BJ (cell line): ENCODE measurements at regions of chr12 and their contacts with region 1.

Region 1: DNA sequence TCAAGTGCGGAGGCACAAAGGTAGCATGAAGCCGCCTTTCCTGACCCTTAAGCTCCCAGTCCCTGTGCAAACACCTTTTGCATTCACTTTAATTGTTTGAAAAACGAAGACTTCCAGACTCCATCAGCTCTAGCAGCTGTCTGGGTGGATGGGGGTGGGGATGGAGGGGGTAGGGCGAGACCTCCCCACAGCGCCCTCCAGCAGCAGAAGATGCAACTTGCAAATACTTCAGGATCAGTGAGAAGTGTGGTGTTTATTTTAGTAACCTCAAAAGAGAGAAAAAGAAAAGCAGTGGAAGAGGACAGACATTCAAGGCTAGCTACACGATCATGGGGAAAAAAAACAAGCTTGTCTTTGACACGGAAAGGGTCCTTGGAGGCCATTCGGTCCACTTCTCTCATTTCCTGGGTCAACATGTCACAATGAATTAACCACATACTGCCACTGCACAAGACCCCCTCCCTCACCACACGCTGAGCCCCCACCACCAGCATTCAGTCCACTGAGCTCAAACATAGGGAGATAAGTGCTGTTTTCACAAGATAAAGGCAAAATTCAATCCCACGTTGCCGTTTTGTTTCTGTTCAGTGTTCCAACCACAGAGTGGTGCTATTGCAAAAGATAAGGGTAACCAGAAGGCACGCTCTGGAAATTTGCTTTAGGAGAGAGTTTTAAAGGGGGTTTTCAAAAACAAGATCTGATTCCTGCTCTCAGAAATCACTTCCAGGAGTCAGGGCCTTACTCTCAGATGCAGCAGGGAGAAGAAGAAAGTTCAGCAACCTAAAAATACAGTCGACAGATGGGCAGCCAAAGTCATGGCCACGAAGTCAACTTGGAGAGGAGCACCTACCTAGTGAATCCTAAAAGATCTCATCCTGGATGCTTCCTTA is 3.3 kb upstream of the NTF3 start:
- DNase-seq: no peak
- H3K4me3 ChIP-seq: no peak overlapping the region
- H3K27me3 ChIP-seq: peaks cover 23% of the 10 kb centered on the region
- CTCF ChIP-seq: peak; percentile 64

Region 2: GRCh38 chr12:5200278-5201087 is 228.1 kb before region 1 on chr12:
- CTCF ChIA-PET with region 1: interaction called, 14 read pairs
- POLR2A ChIA-PET with region 1: no interaction called
- DNase-seq: no peak
- H3K4me3 ChIP-seq: no peak overlapping the region
- H3K27me3 ChIP-seq: peaks cover 1% of the 10 kb centered on the region; the same call in 1 of the 2 replicates
- CTCF ChIP-seq: peak; percentile 66

Region 3: DNA sequence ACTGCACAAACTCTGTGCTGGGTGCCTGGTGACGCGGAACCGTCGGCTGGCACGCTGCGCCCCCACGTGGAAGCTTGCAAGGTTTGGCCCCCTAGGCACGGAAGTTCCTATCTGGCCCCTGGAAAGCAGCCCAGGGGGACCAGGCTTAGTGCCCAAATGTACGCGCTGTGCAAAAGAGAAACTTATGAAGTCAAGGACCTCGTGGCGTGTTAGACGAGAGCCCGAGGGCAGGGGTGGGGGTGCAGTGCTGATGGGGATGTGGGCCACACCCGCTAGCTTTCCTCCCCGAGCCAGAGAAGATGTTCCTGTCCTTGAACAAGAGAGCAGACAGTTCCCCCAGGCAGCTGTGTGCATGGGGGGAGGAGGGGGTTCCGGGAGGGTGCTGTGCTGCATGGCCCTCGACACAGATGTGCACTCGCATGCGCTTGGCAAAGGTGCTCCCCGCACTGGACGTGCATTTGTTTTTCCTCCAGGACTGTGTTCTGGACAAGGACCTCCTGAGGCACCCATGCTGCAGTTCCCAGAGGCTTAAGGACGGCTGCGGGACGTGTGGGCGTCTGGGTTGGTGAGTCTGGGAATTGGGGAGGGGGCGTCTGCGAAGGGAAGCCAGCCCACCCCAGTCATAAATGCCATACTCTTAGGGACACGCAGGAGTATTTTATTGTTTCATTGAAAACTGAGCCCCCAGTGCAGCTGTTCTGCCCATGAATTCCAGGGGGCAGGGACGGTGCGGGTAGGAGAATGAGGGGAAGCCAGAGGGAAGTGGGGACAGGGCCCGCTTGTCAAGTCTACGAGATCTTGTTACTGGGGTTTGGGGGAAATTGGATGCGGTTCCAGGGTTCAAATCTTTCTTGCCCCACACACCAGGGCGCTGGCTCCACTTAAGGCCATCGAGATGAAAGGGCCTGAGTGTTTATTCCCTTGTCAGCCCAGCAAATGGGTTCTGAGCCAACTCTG is 83.3 kb after region 1 on chr12:
- CTCF ChIA-PET with region 1: interaction called, 32 read pairs
- POLR2A ChIA-PET with region 1: interaction called, 4 read pairs
- DNase-seq: no peak
- H3K4me3 ChIP-seq: no peak overlapping the region
- H3K27me3 ChIP-seq: 0 out of 2 replicates have a peak, but pooled peaks cover 1% of the 10 kb centered on the region
- CTCF ChIP-seq: peak; percentile 84

Region 4: GRCh38 chr12:5745265-5745888 is 316.8 kb after region 1 on chr12:
- CTCF ChIA-PET with region 1: interaction called, 21 read pairs
- POLR2A ChIA-PET with region 1: no interaction called
- DNase-seq: no peak
- H3K4me3 ChIP-seq: no peak overlapping the region
- H3K27me3 ChIP-seq: 0 out of 2 replicates have a peak, but pooled peaks cover 2% of the 10 kb centered on the region
- CTCF ChIP-seq: peak; percentile 88